AG04450 (cell line): ENCODE measurements at regions of chr17 and their contacts with region 1.

Region 1: GRCh38 chr17:58710936-58711775 is 18.8 kb downstream of the RAD51C start:
- DNase-seq: peak; percentile 27
- H3K4me3 ChIP-seq: no peak overlapping the region
- H3K27ac ChIP-seq: no peak overlapping the region
- H3K27me3 ChIP-seq: no peaks in the 10 kb centered on the region
- CTCF ChIP-seq: peak; percentile 75

Region 2: GRCh38 chr17:58587702-58588254 is 123.4 kb before region 1 on chr17:
- CTCF ChIA-PET with region 1: interaction called, 10 read pairs
- POLR2A ChIA-PET with region 1: no interaction called
- DNase-seq: no peak
- H3K4me3 ChIP-seq: no peak overlapping the region
- H3K27ac ChIP-seq: no peak overlapping the region
- H3K27me3 ChIP-seq: no peaks in the 10 kb centered on the region
- CTCF ChIP-seq: peak; percentile 98

Region 3: DNA sequence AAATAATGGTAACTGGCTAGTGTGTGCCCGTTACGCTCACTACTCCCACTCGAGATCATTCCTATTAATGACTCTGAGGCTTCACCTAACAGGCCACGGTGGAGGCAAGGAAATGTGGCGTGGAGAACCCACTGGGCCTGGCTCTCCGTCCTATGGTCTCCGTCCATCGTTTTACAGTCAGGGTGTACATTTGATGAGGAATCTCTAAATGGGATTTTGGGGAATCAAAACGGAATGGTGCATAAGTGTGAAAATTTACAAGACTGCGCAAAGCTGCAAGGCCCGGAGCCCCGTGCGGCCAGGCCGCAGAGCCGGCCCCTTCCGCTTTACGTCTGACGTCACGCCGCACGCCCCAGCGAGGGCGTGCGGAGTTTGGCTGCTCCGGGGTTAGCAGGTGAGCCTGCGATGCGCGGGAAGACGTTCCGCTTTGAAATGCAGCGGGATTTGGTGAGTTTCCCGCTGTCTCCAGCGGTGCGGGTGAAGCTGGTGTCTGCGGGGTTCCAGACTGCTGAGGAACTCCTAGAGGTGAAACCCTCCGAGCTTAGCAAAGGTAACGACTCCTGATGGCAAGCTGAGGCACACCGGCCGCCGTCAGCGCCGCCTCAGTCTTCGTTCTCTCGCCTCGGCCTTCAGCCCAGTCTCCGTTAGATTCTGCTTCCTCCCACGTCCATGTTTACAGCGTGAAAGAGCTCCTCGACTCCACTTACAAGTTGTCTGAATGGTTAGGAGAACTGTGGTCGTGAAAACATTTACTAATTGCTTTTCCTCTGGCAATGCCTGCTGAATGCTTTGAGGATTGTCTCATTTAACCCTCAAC is 18.7 kb before region 1 on chr17 and contains the start of gene RAD51C:
- CTCF ChIA-PET with region 1: interaction called, 21 read pairs
- POLR2A ChIA-PET with region 1: no interaction called
- DNase-seq: peak; percentile 56
- H3K4me3 ChIP-seq: peak within 1 kb of the TSS; percentile 83
- H3K27ac ChIP-seq: peak within 1 kb of the TSS; percentile 88
- H3K27me3 ChIP-seq: no peaks in the 10 kb centered on the region
- CTCF ChIP-seq: no peak
- polyA plus RNA-seq, gene RAD51C: 27.5 and 36.1 TPM in 2 replicates

Region 4: DNA sequence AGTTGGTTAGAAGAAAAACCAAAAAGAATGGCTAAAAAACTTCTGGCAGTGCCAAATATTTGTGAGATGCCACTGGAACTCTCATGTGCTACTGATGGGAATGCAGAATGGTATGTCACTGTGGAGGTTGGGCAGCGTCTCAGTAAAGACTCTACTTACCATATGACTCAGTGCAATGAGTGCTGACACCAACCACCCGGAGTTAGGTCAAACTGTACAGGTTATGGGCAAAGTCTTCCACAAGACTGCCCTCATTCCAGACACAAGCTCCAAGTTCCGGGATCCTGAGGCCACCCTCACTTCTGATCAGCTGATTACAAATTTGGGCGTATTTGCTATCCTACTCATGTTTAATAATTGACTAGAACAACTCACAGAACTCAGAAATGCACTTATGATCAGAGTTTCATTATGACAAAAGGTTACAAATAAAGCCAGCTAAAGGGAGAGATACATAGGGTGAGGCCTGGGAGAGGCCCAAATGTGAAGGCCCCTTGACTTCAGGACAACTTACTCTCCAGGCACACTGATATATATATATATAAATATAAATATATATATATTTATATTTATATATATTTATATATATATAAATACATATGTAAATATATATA is 280.7 kb after region 1 on chr17:
- CTCF ChIA-PET with region 1: interaction called, 15 read pairs
- POLR2A ChIA-PET with region 1: interaction called, 3 read pairs
- DNase-seq: no peak
- H3K4me3 ChIP-seq: no peak overlapping the region
- H3K27ac ChIP-seq: no peak overlapping the region
- H3K27me3 ChIP-seq: no peaks in the 10 kb centered on the region
- CTCF ChIP-seq: no peak

Region 5: GRCh38 chr17:59010026-59010425 is 298.9 kb after region 1 on chr17:
- CTCF ChIA-PET with region 1: interaction called, 102 read pairs
- POLR2A ChIA-PET with region 1: no interaction called
- DNase-seq: no peak
- H3K4me3 ChIP-seq: no peak overlapping the region
- H3K27ac ChIP-seq: no peak overlapping the region
- H3K27me3 ChIP-seq: no peaks in the 10 kb centered on the region
- CTCF ChIP-seq: no peak